Activated T-helper 1 cell treated with anti-CD3 and anti-CD28 coated beads, Interleukin-12 subunit alpha, Interleukin-12 subunit beta, Interleukin-2, Interleukin-4 antibody, amounts not matched to agents 30 ng/mL and 10 ng/mL and 1 ng/mL, durations not matched to agents 14 hours and 24 hours and 36 hours (primary cell): ENCODE measurements at regions of chr18 and their contacts with region 1.

Region 1: GRCh38 chr18:12947355-12948041 is at the start of gene SEH1L:
- DNase-seq: peak; percentile 96
- H3K4me3 Mint-ChIP-seq: peak within 1 kb of the TSS; percentile 98
- H3K27ac Mint-ChIP-seq: peak within 1 kb of the TSS; percentile 98
- H3K4me1 Mint-ChIP-seq: peaks cover 44% of the 10 kb centered on the region
- H3K27me3 Mint-ChIP-seq: peaks cover 2% of the 10 kb centered on the region
- total RNA-seq, gene SEH1L: 121 and 124 TPM in 2 replicates

Region 2: GRCh38 chr18:12371590-12371989 is 575.9 kb before region 1 on chr18:
- intact Hi-C with region 1: no loop called
- DNase-seq: no peak
- H3K4me3 Mint-ChIP-seq: no peak overlapping the region
- H3K27ac Mint-ChIP-seq: no peak overlapping the region
- H3K4me1 Mint-ChIP-seq: peaks cover 36% of the 10 kb centered on the region
- H3K27me3 Mint-ChIP-seq: no peaks in the 10 kb centered on the region

Region 3: GRCh38 chr18:12702221-12703095 is 245.0 kb before region 1 on chr18 and contains the starts of genes CEP76 and PSMG2:
- intact Hi-C with region 1: loop called (anchors 1 kb)
- DNase-seq: peak; percentile 80
- H3K4me3 Mint-ChIP-seq: peak within 1 kb of the TSS; percentile 97
- H3K27ac Mint-ChIP-seq: peak within 1 kb of the TSS; percentile 92
- H3K4me1 Mint-ChIP-seq: peaks cover 54% of the 10 kb centered on the region
- H3K27me3 Mint-ChIP-seq: no peaks in the 10 kb centered on the region
- total RNA-seq, gene CEP76: 16.1 and 17.5 TPM in 2 replicates
- total RNA-seq, gene PSMG2: 113 and 118 TPM in 2 replicates

Region 4: DNA sequence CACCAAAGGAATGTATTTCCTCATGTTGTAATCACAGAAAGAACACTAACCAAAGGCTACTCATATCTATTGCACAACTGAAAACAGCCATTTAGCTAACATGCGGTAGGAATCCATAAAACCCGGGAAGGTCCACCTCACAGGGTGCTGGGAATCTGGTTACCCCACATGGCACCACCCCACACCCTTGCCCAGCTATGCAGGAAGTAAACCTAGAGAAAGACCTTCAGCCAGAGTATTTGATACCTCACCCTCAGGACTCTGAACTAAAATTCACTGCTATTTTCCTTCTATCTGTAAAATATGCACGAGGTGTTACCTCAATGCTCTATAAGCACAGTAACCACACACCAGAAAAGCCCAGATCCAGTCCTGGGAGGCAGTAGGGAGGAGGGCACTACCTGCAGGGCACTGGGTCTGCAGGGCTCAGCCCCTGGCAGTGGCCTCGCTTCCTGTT is 109.3 kb before region 1 on chr18:
- intact Hi-C with region 1: loop called (anchors 1 kb)
- DNase-seq: peak; percentile 16
- H3K4me3 Mint-ChIP-seq: peak overlapping the region; percentile 78
- H3K27ac Mint-ChIP-seq: peak overlapping the region; percentile 92
- H3K4me1 Mint-ChIP-seq: peaks cover 78% of the 10 kb centered on the region
- H3K27me3 Mint-ChIP-seq: no peaks in the 10 kb centered on the region

Region 5: DNA sequence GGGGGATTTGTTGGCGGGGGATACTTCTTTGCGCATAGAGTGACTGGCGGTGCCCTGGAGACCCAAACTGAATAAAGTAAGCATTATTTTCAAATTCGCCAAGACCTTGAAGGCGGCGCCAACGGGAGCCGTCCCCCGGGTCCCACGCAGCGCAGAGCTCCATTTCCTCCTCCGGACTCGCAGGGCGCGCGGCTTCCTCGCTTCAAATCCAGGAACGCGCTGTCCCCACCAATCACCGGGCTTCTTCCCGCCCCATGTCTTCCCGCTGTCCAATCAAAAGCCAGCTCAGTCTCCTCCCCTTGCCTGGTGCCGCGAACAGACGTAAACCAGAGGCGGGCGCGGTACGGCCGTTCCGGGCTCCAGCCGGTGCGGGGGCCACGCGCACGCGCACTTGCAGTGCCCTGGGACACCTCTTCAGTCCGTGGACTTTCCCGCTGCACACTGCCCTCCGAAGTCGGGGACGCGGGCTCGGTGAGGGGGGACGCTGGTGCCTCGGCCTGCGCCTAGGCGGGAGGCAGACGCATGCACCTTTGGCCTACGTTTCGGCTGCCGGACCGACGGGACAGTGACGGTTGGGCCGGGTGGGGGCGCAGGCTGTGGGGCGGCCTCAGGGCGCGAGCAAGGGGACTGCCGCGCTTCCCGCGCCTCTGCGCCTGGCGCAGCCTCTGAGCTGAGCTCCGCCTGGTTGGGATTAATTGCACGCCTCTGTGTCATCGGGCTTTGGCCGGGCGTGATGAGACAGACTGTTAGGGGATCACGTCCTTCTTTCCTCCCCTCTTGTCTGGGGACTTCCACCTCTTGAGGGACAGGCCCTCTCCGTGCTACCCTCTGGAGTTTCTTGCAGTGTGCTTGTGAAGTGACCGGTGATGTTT is 43.7 kb after region 1 on chr18 and contains the start of gene CEP192:
- intact Hi-C with region 1: loop called (anchors 1 kb)
- DNase-seq: peak; percentile 98
- H3K4me3 Mint-ChIP-seq: peak within 1 kb of the TSS; percentile 93
- H3K27ac Mint-ChIP-seq: peak within 1 kb of the TSS; percentile 94
- H3K4me1 Mint-ChIP-seq: peaks cover 24% of the 10 kb centered on the region
- H3K27me3 Mint-ChIP-seq: peaks cover 1% of the 10 kb centered on the region
- total RNA-seq, gene CEP192: 31.2 and 32.0 TPM in 2 replicates

Region 6: DNA sequence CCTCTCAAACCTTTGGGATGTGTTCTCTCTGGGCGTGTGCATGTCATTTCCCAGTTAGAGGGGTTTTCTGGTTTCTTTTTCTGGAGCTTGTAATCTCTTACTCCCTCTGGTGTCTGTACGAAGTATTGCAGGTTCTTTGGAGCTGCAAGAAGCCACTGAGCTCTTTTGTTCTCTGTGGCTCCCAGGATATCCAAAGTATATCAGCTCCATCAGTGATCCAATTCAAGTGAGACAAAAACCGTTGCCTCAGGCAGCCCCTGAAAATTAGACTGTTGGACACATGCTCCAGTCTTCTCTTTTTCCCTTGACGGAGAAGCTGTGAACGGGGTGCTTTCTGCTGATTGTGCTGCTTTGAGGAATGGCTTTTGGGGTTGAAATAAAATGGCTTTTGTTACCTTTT is 212.1 kb after region 1 on chr18:
- intact Hi-C with region 1: loop called (anchors 5 kb)
- DNase-seq: peak; percentile 30
- H3K4me3 Mint-ChIP-seq: no peak overlapping the region
- H3K27ac Mint-ChIP-seq: no peak overlapping the region
- H3K4me1 Mint-ChIP-seq: peaks cover 6% of the 10 kb centered on the region
- H3K27me3 Mint-ChIP-seq: peaks cover 1% of the 10 kb centered on the region

Region 7: GRCh38 chr18:13577091-13577697 is 629.7 kb after region 1 on chr18:
- intact Hi-C with region 1: loop called (anchors 5 kb)
- DNase-seq: peak; percentile 41
- H3K4me3 Mint-ChIP-seq: peak overlapping the region; percentile 67
- H3K27ac Mint-ChIP-seq: peak overlapping the region; percentile 87
- H3K4me1 Mint-ChIP-seq: peaks cover 56% of the 10 kb centered on the region
- H3K27me3 Mint-ChIP-seq: no peaks in the 10 kb centered on the region